ENCODE measurements at regions of chr15 and their contacts with region 1.

Region 1: DNA sequence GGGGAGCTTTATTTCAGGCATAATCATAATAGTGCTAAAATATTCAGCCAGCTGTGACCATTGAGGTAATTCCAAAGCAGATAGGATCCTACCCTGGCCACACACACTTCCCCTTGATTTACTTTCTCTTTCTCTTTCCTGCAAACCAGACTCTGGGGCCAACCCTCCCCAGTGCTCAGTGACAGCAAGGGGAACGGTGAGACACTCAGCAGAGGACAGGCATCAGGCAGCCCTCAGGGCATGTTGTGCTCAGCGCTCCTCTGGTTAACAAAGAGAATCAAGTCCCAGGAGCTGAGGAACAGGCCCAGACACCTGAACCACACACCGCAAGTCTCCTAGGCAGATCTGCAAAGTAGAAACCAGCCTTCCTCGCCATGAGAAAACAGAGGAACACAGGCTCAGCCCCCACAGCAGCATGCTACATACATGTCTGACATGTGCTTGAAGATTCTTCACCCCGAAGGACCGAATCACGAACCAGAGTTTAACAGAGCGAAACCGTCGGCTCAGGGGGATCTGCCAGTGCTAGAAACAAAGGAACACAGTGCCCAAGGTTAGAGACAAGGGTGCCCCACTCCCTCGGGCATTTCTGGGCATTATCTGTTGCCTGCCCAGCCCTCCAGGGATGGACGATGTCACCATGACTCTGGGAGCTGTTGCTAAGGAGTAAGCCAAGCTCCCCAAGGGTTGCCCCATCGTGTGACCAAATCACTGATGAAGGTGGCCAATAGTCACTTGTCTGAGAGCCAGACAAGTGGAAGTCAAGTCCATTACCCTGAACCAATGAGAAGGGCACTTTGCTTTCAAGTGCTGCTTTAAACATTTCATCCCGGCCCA is 17.5 kb downstream of the HDC start:
- DNase-seq: peak in 8 of 9 donors; percentile 18 to 62 (median 53)
- ATAC-seq: peak; percentile 93
- H3K4me3 ChIP-seq: peak overlapping the region; percentile 53
- H3K4me3 Mint-ChIP-seq: peak overlapping the region; percentile 55 to 88 (median 84)
- H3K27ac ChIP-seq: peak overlapping the region; percentile 53
- H3K27ac Mint-ChIP-seq: peak overlapping the region; percentile 89 to 99 (median 94)
- H3K4me1 ChIP-seq: peaks cover 8 to 12% of the 10 kb centered on the region in 2 donors
- H3K4me1 Mint-ChIP-seq: peaks cover 7 to 65% (median 22%) of the 10 kb centered on the region in 7 donors
- H3K27me3 ChIP-seq: no peaks in the 10 kb centered on the region
- H3K27me3 Mint-ChIP-seq: peaks cover 0 to 5% (median 0%) of the 10 kb centered on the region in 5 donors

Region 2: GRCh38 chr15:49843725-49844124 is 404.3 kb before region 1 on chr15:
- CTCF ChIA-PET with region 1: no interaction called
- POLR2A ChIA-PET with region 1: no interaction called
- intact Hi-C with region 1: no loop called
- DNase-seq: no peak
- ATAC-seq: no peak
- H3K4me3 ChIP-seq: no peak overlapping the region
- H3K4me3 Mint-ChIP-seq: no peak overlapping the region
- H3K27ac ChIP-seq: no peak overlapping the region
- H3K27ac Mint-ChIP-seq: no peak overlapping the region
- H3K4me1 ChIP-seq: no peaks in the 10 kb centered on the region
- H3K4me1 Mint-ChIP-seq: peaks cover 0 to 2% (median 0%) of the 10 kb centered on the region in 7 donors
- H3K27me3 ChIP-seq: no peaks in the 10 kb centered on the region
- H3K27me3 Mint-ChIP-seq: peaks cover 0 to 30% (median 6%) of the 10 kb centered on the region in 5 donors

Region 3: GRCh38 chr15:49895337-49896223 is 352.5 kb before region 1 on chr15:
- CTCF ChIA-PET with region 1: no interaction called
- POLR2A ChIA-PET with region 1: no interaction called
- intact Hi-C with region 1: no loop called
- DNase-seq: no peak
- ATAC-seq: no peak
- H3K4me3 ChIP-seq: no peak overlapping the region
- H3K4me3 Mint-ChIP-seq: no peak overlapping the region
- H3K27ac ChIP-seq: no peak overlapping the region
- H3K27ac Mint-ChIP-seq: no peak overlapping the region
- H3K4me1 ChIP-seq: no peaks in the 10 kb centered on the region
- H3K4me1 Mint-ChIP-seq: no peaks in the 10 kb centered on the region
- H3K27me3 ChIP-seq: no peaks in the 10 kb centered on the region
- H3K27me3 Mint-ChIP-seq: peaks cover 0 to 10% (median 0%) of the 10 kb centered on the region in 5 donors

Region 4: DNA sequence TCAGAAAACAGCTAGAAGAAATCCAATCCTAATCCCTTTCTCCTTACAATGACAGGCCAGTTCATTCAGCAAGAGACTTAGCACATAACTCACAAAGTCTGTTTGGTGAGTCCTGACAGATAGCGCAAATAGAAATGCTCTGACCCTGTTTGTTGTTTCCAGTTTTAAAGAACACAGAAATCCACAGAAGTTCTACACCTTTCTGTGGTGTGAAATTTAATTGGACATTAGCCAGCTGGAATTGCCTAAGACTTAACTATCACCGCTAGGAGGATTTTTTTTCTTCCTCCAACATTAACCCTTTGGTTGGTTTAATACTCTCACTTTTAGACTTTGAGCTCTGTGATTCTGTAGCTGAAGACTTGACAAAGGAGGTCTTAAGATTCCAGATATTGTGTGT is 13.3 kb before region 1 on chr15:
- CTCF ChIA-PET with region 1: no interaction called
- POLR2A ChIA-PET with region 1: no interaction called
- intact Hi-C with region 1: no loop called
- DNase-seq: no peak
- ATAC-seq: no peak
- H3K4me3 ChIP-seq: no peak overlapping the region
- H3K4me3 Mint-ChIP-seq: no peak overlapping the region
- H3K27ac ChIP-seq: no peak overlapping the region
- H3K27ac Mint-ChIP-seq: peak overlapping the region in 1 of 9 donors; percentile 42
- H3K4me1 ChIP-seq: no peaks in the 10 kb centered on the region
- H3K4me1 Mint-ChIP-seq: peaks cover 0 to 8% (median 0%) of the 10 kb centered on the region in 7 donors
- H3K27me3 ChIP-seq: no peaks in the 10 kb centered on the region
- H3K27me3 Mint-ChIP-seq: no peaks in the 10 kb centered on the region

Region 5: GRCh38 chr15:50261981-50262380 is 13.9 kb after region 1 on chr15:
- CTCF ChIA-PET with region 1: no interaction called
- POLR2A ChIA-PET with region 1: no interaction called
- intact Hi-C with region 1: loop called in 1 of 2 experiments (anchors 1 kb)
- DNase-seq: no peak
- ATAC-seq: no peak
- H3K4me3 ChIP-seq: no peak overlapping the region
- H3K4me3 Mint-ChIP-seq: peak overlapping the region in 1 of 10 donors; percentile 44
- H3K27ac ChIP-seq: no peak overlapping the region
- H3K27ac Mint-ChIP-seq: peak overlapping the region in 2 of 9 donors; percentile 14 to 94
- H3K4me1 ChIP-seq: peaks cover 7 to 27% of the 10 kb centered on the region in 2 donors
- H3K4me1 Mint-ChIP-seq: peaks cover 16 to 58% (median 32%) of the 10 kb centered on the region in 7 donors
- H3K27me3 ChIP-seq: no peaks in the 10 kb centered on the region
- H3K27me3 Mint-ChIP-seq: peaks cover 0 to 2% (median 0%) of the 10 kb centered on the region in 5 donors

Region 6: DNA sequence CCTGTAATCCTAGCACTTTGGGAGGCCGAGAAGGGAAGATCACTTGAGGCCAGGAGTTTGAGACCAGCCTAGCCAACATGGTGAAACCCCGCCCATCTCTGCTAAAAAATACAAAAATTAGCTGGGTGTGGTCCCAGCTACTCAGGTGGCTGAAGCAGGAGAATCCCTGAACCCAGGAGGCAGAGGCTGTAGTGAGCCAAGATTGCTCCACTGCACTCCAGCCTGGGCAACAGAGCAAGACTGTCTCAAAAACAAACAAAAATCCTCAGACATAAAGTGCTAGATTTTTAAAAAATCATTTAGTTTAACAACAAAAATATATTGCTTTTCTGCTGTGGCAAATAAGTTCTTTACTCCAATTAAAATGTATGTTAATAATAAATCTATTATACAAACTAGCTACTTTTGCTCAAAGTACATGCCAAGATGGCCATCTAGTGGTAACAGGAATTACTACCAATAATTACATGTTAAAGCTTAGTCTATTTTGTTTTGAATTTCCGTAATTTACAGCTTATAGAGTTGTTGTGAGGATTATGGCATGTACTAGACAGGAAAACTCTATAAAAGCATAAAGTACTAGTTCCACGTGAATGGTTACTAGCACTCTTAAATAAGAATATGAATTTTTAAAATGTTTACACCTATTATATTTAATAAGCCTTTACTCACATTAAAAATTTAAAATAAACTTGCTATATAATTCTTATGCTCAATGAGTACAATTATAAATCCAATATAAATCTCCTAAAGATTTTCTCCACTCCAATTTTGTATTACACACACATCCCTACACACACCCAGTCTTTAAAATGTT is 68.0 kb after region 1 on chr15:
- CTCF ChIA-PET with region 1: no interaction called
- POLR2A ChIA-PET with region 1: no interaction called
- intact Hi-C with region 1: loop called in 1 of 2 experiments (anchors 5 kb)
- DNase-seq: peak in 7 of 9 donors; percentile 8 to 47 (median 30)
- ATAC-seq: peak; percentile 66
- H3K4me3 ChIP-seq: no peak overlapping the region
- H3K4me3 Mint-ChIP-seq: no peak overlapping the region
- H3K27ac ChIP-seq: no peak overlapping the region
- H3K27ac Mint-ChIP-seq: no peak overlapping the region
- H3K4me1 ChIP-seq: peaks cover 0 to 6% of the 10 kb centered on the region in 2 donors
- H3K4me1 Mint-ChIP-seq: peaks cover 12 to 34% (median 21%) of the 10 kb centered on the region in 7 donors
- H3K27me3 ChIP-seq: no peaks in the 10 kb centered on the region
- H3K27me3 Mint-ChIP-seq: no peaks in the 10 kb centered on the region